ENCODE measurements at regions of chr18 and their contacts with region 1.

Region 1: GRCh38 chr18:830315-830901 is 18.4 kb upstream of the YES1 start:
- DNase-seq: no peak
- H3K4me3 ChIP-seq: no peak overlapping the region
- H3K27ac ChIP-seq: no peak overlapping the region
- H3K4me1 ChIP-seq: no peaks in the 10 kb centered on the region
- H3K27me3 ChIP-seq: no peaks in the 10 kb centered on the region
- CTCF ChIP-seq: no peak
- POLR2A ChIP-seq: no peak

Region 2: DNA sequence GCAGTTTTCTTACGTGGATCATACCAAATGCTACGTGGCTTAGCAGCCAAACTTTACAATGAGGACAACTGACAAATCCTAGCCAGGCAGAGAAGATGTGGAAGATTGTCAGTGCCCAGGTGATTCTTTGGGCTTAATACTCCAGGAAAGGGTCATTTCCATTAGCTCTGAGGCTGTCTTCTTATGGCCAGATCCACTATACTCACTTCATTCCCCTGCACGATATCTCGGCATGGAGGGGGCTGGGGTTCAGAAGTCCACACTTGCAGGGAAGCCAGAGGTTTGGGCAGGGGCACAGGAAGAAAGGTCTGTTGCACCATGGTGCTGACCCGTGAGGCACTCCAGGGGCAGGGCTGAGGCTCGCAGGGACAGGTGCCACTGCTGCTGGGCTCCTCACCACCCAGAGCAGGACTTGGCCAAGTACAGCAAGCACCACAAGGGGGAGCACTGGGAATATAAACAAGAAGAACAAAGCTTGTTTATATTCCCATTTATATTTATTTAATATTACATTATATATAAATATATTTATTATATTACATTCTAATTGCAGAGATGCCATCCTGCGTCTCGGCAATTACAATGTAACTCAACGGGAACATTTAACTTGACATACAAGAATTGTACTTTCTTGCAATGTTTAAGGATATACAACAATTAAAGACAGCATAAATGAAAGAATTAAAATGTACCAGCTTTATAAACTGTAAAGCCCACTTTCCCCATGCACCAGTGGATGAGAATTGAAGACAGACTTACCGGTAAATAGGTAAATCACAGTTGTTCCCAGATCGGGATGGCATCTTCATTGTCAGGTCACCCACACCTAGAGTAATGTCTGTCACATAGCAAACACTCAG is 206.4 kb before region 1 on chr18:
- intact Hi-C with region 1: loop called (anchors 2 kb)
- DNase-seq: peak; percentile 66
- H3K4me3 ChIP-seq: no peak overlapping the region
- H3K27ac ChIP-seq: no peak overlapping the region
- H3K4me1 ChIP-seq: no peaks in the 10 kb centered on the region
- H3K27me3 ChIP-seq: no peaks in the 10 kb centered on the region
- CTCF ChIP-seq: peak in 3 of 4 experiments; percentile 32 to 50 (median 44)
- POLR2A ChIP-seq: no peak

Region 3: GRCh38 chr18:741931-742512 is 88.4 kb before region 1 on chr18:
- intact Hi-C with region 1: loop called (anchors 2 kb)
- DNase-seq: no peak
- H3K4me3 ChIP-seq: no peak overlapping the region
- H3K27ac ChIP-seq: no peak overlapping the region
- H3K4me1 ChIP-seq: no peaks in the 10 kb centered on the region
- H3K27me3 ChIP-seq: no peaks in the 10 kb centered on the region
- CTCF ChIP-seq: peak; percentile 49 to 82 (median 80)
- POLR2A ChIP-seq: no peak